Activated CD4-positive, alpha-beta T cell treated with anti-CD3 and anti-CD28 coated beads for 36 hours (primary cell): ENCODE measurements at regions of chr2 and their contacts with region 1.

Region 1: DNA sequence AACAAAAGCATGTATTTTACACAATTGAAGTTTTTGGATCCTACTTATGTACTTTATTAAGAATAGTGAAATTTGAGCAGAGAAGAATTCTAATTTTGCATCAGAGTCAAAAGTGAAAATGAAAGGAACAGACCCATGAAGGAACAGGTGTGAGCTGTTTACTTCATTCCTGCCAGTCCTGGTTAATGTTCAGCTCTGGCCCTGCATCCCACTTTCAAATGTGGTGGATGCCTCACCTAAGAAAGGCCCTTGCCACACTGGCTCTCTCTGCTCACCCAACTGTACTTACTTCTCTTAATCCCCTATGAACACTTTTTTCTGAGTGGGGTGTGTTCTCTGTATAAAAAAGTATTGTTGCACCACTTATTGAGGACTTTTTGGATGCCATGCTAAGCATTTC is 22.2 kb downstream of the FAM110C start:
- DNase-seq: no peak
- ATAC-seq: peak; percentile 49
- H3K4me3 Mint-ChIP-seq: no peak overlapping the region
- H3K27ac Mint-ChIP-seq: no peak overlapping the region
- H3K4me1 Mint-ChIP-seq: peaks cover 16% of the 10 kb centered on the region
- H3K27me3 Mint-ChIP-seq: peaks cover 5% of the 10 kb centered on the region

Region 2: DNA sequence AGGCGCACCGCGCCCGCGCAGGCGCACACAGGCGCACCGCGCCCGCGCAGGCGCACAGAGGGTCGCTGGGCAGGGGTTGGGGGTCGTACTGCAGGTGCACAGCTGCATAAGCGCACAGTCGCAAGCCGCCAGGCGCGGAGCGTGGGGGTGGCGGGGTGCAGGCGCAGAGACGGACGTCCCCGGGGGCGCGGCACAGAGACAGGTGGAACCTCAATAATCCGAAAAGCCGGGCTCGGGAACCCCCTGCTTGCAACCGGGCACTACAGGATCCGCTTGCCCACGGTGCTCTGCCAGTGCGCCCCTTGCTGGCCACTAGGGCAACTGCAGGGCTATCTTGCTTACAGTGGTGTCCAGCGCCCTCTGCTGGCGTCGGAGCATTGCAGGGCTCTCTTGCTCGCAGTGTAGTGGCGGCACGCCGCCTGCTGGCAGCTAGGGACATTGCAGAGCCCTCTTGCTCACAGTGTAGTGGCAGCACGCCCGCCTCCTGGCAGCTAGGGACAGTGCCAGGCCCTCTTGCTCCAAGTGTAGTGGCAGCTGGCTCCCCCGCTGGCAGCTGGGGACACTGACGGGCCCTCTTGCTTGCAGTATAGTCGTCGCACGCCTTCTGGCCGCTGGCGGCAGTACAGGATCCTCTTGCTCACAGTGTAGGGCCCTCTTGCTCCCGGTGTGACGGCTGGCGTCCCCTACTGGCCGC is 12.7 kb before region 1 on chr2:
- CTCF ChIA-PET with region 1: interaction called, 12 read pairs
- POLR2A ChIA-PET with region 1: no interaction called
- intact Hi-C with region 1: no loop called
- DNase-seq: peak; percentile 90
- ATAC-seq: peak; percentile 92
- H3K4me3 Mint-ChIP-seq: no peak overlapping the region
- H3K27ac Mint-ChIP-seq: no peak overlapping the region
- H3K4me1 Mint-ChIP-seq: peaks cover 2% of the 10 kb centered on the region
- H3K27me3 Mint-ChIP-seq: peaks cover 10% of the 10 kb centered on the region